Gastrocnemius medialis (tissue), 4 donors: ENCODE measurements at regions of chr7 and their contacts with region 1.

Region 1: GRCh38 chr7:41977151-41977651 is 259.8 kb downstream of the GLI3 start:
- DNase-seq: peak; percentile 34 to 66
- ATAC-seq: peak; percentile 86 to 89
- H3K4me3 ChIP-seq: no peak overlapping the region
- H3K27ac ChIP-seq: peak overlapping the region; percentile 33 to 65 (median 54)
- H3K4me1 ChIP-seq: peaks cover 30 to 48% of the 10 kb centered on the region in 2 donors
- H3K27me3 ChIP-seq: no peaks in the 10 kb centered on the region
- CTCF ChIP-seq: peak; percentile 65 to 80 (median 68)
- POLR2A ChIP-seq: no peak

Region 2: DNA sequence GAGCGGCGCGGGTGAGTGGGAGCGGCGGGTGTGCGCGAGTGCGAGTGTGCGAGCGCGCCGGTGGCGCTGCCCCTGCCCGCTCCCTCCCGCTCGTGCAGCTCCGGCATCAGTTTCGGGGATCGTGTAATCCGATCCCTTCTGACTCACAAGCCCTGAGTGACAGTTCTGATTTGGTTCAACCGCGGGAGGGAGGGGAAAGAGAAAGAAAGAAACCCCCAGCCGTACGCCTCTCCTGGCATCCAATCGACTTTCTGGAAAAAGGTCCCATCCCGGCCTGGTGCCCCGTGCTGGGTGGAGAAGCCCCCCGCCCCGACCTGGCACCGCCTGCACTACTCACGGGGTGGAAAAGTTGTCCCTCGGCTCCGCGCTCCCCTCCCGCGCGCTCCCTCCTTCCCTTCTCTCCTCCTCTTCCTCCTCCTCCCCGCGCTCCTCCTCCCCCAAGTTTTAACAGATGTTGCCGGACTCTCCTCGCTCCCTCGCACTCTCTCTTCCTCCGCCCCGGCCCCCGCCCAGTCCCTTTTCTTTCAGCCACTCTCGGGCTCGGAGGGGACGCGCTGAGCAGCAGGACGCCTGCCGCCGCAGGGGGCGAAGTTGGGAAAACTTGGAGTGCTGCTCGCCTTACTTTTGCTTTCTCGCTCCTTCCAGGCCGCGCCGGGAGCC is 260.1 kb after region 1 on chr7 and contains the start of gene GLI3:
- in situ Hi-C with region 1: loop called in 1 of 4 experiments (anchors 25 kb)
- intact Hi-C with region 1: loop called (anchors 5 kb)
- DNase-seq: peak; percentile 68 to 74
- ATAC-seq: peak; percentile 81 to 86
- H3K4me3 ChIP-seq: peak within 1 kb of the TSS; percentile 78 to 89 (median 82)
- H3K27ac ChIP-seq: peak within 1 kb of the TSS; percentile 78 to 88 (median 82)
- H3K4me1 ChIP-seq: peaks cover 9 to 16% of the 10 kb centered on the region in 2 donors
- H3K27me3 ChIP-seq: peaks cover 0 to 18% (median 17%) of the 10 kb centered on the region in 3 donors
- CTCF ChIP-seq: peak in 2 of 5 experiments; percentile 20 to 38
- POLR2A ChIP-seq: peak; percentile 20 to 63
- total RNA-seq, gene GLI3: 0.46 to 1.6 (median 0.81) TPM

Region 3: GRCh38 chr7:42690794-42691639 is 713.8 kb after region 1 on chr7:
- in situ Hi-C with region 1: loop called in 1 of 4 experiments (anchors 10 kb)
- intact Hi-C with region 1: no loop called
- DNase-seq: no peak
- ATAC-seq: no peak
- H3K4me3 ChIP-seq: no peak overlapping the region
- H3K27ac ChIP-seq: no peak overlapping the region
- H3K4me1 ChIP-seq: peaks cover 0 to 12% of the 10 kb centered on the region in 2 donors
- H3K27me3 ChIP-seq: no peaks in the 10 kb centered on the region
- CTCF ChIP-seq: peak in 1 of 5 experiments; percentile 13
- POLR2A ChIP-seq: no peak

Region 4: DNA sequence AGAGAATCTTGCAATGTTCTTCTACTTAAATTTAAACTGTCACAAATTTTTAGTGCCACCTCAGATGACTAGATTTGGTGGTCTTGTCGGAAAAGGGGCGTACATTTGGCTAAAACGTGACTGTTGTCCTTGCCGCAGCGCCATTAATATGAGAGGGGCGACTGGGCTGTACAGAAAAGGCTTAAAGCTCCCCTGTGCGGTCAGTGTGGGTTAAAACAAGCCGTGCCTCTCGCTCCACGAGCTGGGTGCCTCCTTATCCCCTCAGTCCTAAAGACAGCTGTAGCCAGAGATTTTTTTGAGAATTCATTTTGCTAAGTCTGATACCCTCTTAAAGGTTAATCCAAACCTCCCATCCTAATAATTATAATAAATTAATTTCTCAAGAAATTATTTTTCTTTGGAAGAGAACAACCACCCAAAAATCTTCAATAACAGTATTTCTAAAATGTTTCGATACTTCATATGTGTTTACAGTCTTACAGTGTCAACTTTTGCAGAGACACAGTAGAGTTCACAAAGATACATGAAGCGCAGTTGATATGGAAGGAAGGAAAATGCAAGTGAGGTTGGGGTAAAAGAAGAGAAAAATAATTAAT is 866.1 kb after region 1 on chr7:
- in situ Hi-C with region 1: no loop called
- intact Hi-C with region 1: loop called (anchors 10 kb)
- DNase-seq: peak in 1 of 2 donors; percentile 23
- ATAC-seq: peak; percentile 49 to 68
- H3K4me3 ChIP-seq: peak overlapping the region in 2 of 4 donors; percentile 24 to 34
- H3K27ac ChIP-seq: no peak overlapping the region
- H3K4me1 ChIP-seq: peaks cover 0 to 3% of the 10 kb centered on the region in 2 donors
- H3K27me3 ChIP-seq: no peaks in the 10 kb centered on the region
- CTCF ChIP-seq: peak in 3 of 5 experiments; percentile 38 to 49 (median 44)
- POLR2A ChIP-seq: no peak